ENCODE measurements at regions of chr18 and their contacts with region 1.

Region 1: DNA sequence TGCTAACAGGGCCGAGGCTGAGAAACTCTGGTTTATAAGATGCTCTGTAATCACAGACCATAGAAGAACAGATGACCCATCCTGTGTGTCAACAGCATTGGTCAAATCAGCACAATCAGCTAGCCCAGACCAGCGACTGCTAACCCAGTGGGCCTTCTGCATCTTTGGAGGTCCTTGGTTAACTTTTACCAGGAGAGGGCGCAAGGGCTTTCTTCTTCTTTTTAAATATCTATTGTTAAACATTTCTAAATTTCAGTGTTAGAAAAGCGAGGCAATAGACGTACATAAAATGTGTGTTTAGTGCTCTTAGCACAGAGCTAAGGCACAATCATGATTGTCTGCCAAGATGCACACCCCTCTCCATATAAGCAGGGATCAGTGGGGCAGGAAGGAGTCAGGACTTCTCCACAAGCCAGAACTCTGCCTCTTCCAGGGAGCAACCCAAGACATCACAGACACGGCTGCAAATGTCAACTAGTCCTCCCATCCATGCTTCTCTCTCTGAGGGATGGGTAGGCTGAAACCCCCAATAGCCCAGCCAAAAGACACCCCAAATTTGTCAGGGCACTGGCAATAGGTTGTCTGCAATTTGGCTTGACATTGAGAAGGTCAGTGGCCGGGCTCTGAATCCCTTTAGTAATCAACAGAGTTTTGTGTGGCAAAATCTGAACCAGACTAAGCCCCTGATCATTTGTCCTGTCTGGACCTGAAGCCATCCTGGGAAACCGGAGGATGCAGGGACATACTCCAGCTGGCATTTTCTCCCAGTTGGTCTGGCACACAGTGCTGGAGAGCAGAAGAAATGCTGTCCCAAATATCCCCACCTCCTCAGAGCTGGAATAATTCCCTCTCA is 188.2 kb downstream of the BCL2 start:
- ATAC-seq: peak in 5 of 8 experiments; percentile 47 to 83 (median 62)
- H3K4me3 ChIP-seq: no peak overlapping the region
- H3K27ac ChIP-seq: no peak overlapping the region
- H3K4me1 ChIP-seq: peaks cover 0 to 14% of the 10 kb centered on the region in 2 donors

Region 2: GRCh38 chr18:63236413-63236812 is 105.1 kb after region 1 on chr18:
- in situ Hi-C with region 1: no loop called
- ATAC-seq: no peak
- H3K4me3 ChIP-seq: no peak overlapping the region
- H3K27ac ChIP-seq: no peak overlapping the region
- H3K4me1 ChIP-seq: peaks cover 18 to 21% of the 10 kb centered on the region in 2 donors

Region 3: GRCh38 chr18:63320046-63320689 is 188.8 kb after region 1 on chr18:
- in situ Hi-C with region 1: loop called in 4 of 9 experiments (anchors 10 to 25 kb)
- ATAC-seq: peak; percentile 78 to 85 (median 84)
- H3K4me3 ChIP-seq: peak overlapping the region; percentile 62 to 94 (median 75)
- H3K27ac ChIP-seq: peak overlapping the region; percentile 85 to 86
- H3K4me1 ChIP-seq: peaks cover 18 to 29% of the 10 kb centered on the region in 2 donors

Region 4: GRCh38 chr18:63439334-63439733 is 308.0 kb after region 1 on chr18:
- in situ Hi-C with region 1: loop called in 1 of 9 experiments (anchors 25 kb)
- ATAC-seq: peak; percentile 15 to 69 (median 50)
- H3K4me3 ChIP-seq: no peak overlapping the region
- H3K27ac ChIP-seq: no peak overlapping the region
- H3K4me1 ChIP-seq: no peaks in the 10 kb centered on the region

Measured in motor neuron (in vitro differentiated cells).